CD4-positive, alpha-beta memory T cell (primary cell): ENCODE measurements at regions of chr12 and their contacts with region 1.

Region 1: GRCh38 chr12:949453-950191 is at the start of gene RAD52:
- DNase-seq: peak; percentile 96 to 97 (median 96)
- H3K4me3 ChIP-seq: peak within 1 kb of the TSS; percentile 70 to 98
- H3K4me3 Mint-ChIP-seq: peak within 1 kb of the TSS; percentile 92 to 97 (median 95)
- H3K27ac ChIP-seq: peak within 1 kb of the TSS; percentile 75
- H3K27ac Mint-ChIP-seq: peak within 1 kb of the TSS; percentile 93 to 96 (median 94)
- H3K4me1 ChIP-seq: peaks cover 22% of the 10 kb centered on the region
- H3K4me1 Mint-ChIP-seq: peaks cover 18 to 41% (median 28%) of the 10 kb centered on the region in 4 donors
- H3K27me3 ChIP-seq: no peaks in the 10 kb centered on the region
- H3K27me3 Mint-ChIP-seq: no peaks in the 10 kb centered on the region
- total RNA-seq, gene RAD52: 30.7 to 31.5 TPM

Region 2: GRCh38 chr12:563250-563781 is 386.3 kb before region 1 on chr12:
- CTCF ChIA-PET with region 1: interaction called, 20 read pairs
- POLR2A ChIA-PET with region 1: interaction called, 8 read pairs
- intact Hi-C with region 1: no loop called
- DNase-seq: peak; percentile 74 to 81 (median 78)
- H3K4me3 ChIP-seq: peak overlapping the region; percentile 44 to 51
- H3K4me3 Mint-ChIP-seq: peak overlapping the region; percentile 79 to 93 (median 86)
- H3K27ac ChIP-seq: peak overlapping the region; percentile 71
- H3K27ac Mint-ChIP-seq: peak overlapping the region; percentile 88 to 97 (median 93)
- H3K4me1 ChIP-seq: peaks cover 60% of the 10 kb centered on the region
- H3K4me1 Mint-ChIP-seq: peaks cover 55 to 83% (median 69%) of the 10 kb centered on the region in 4 donors
- H3K27me3 ChIP-seq: no peaks in the 10 kb centered on the region
- H3K27me3 Mint-ChIP-seq: no peaks in the 10 kb centered on the region

Region 3: DNA sequence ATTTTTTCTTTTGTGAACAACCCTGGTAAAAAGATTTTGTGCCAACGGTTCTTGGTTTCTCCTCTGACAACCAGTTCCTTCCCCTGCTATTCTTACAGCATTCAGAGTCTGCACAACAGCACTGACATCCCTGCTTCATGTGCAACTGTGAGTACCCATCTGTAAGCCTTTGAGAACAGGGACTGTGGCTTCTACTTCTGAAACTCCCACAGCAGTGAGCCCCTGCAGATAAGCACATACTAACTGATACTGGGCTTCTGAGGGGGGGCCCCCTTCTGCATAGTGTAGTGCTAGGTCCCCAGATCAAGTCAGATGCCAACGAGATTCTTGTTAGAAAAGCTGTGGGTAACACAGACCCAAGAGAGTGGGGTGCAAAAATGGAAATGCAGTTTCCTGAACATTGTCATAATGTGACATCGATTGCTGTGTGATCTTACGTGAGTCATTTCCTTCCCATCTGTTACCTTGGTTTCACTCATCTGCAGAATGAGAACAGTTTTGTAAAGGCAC is 275.3 kb before region 1 on chr12:
- CTCF ChIA-PET with region 1: no interaction called
- POLR2A ChIA-PET with region 1: no interaction called
- intact Hi-C with region 1: no loop called
- DNase-seq: peak; percentile 77 to 91 (median 83)
- H3K4me3 ChIP-seq: peak overlapping the region; percentile 27 to 44
- H3K4me3 Mint-ChIP-seq: peak overlapping the region; percentile 67 to 91 (median 84)
- H3K27ac ChIP-seq: peak overlapping the region; percentile 70
- H3K27ac Mint-ChIP-seq: peak overlapping the region; percentile 93 to 100 (median 99)
- H3K4me1 ChIP-seq: peaks cover 61% of the 10 kb centered on the region
- H3K4me1 Mint-ChIP-seq: peaks cover 36 to 67% (median 53%) of the 10 kb centered on the region in 4 donors
- H3K27me3 ChIP-seq: no peaks in the 10 kb centered on the region
- H3K27me3 Mint-ChIP-seq: no peaks in the 10 kb centered on the region

Region 4: DNA sequence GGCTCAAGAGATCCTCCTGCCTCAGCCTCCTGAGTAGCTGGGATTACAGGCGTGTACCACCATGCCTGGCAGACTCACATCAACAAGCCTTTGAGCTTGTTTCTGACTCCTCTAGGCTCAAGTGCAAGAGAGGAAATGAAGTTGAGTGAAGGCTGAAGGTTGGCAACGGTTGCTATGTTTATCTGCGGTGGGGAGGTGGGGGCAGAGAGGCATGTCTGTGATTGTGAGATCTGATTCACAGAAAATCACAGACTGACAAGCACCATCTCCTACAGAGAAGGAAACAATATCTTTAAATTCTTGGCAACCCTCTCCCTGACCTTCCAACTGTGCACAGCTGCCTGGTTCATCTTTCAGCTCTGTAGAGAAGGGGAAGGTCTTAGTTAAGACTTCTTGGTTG is 264.2 kb before region 1 on chr12:
- CTCF ChIA-PET with region 1: no interaction called
- POLR2A ChIA-PET with region 1: no interaction called
- intact Hi-C with region 1: loop called (anchors 5 kb)
- DNase-seq: peak; percentile 90 to 97 (median 92)
- H3K4me3 ChIP-seq: no peak overlapping the region
- H3K4me3 Mint-ChIP-seq: peak overlapping the region in 7 of 8 donors; percentile 53 to 81 (median 73)
- H3K27ac ChIP-seq: peak overlapping the region; percentile 81
- H3K27ac Mint-ChIP-seq: peak overlapping the region; percentile 90 to 100 (median 99)
- H3K4me1 ChIP-seq: peaks cover 33% of the 10 kb centered on the region
- H3K4me1 Mint-ChIP-seq: peaks cover 32 to 43% (median 35%) of the 10 kb centered on the region in 4 donors
- H3K27me3 ChIP-seq: no peaks in the 10 kb centered on the region
- H3K27me3 Mint-ChIP-seq: no peaks in the 10 kb centered on the region

Region 5: DNA sequence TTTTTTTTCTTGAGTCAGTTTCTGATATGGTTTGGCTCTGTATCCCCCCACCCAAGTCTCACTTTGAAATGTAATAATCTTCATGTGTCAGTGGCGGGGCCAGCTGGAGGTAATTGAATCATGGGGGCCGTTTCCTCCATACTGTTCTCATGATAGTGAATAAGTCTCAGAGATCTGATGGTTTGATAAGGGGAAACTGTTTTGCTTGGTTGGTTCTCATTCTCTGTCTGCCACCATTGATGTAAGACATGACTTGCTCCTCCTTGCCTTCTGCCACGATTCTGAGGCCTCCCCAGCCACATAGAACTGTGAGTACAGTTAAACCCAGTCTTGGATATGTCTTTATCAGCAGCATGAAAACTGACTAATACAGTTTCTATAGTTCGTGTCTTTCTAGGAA is 154.3 kb before region 1 on chr12:
- CTCF ChIA-PET with region 1: no interaction called
- POLR2A ChIA-PET with region 1: no interaction called
- intact Hi-C with region 1: no loop called
- DNase-seq: peak; percentile 27 to 70 (median 37)
- H3K4me3 ChIP-seq: no peak overlapping the region
- H3K4me3 Mint-ChIP-seq: peak overlapping the region in 7 of 8 donors; percentile 48 to 69 (median 52)
- H3K27ac ChIP-seq: no peak overlapping the region
- H3K27ac Mint-ChIP-seq: peak overlapping the region; percentile 43 to 88 (median 83)
- H3K4me1 ChIP-seq: peaks cover 75% of the 10 kb centered on the region
- H3K4me1 Mint-ChIP-seq: peaks cover 49 to 84% (median 68%) of the 10 kb centered on the region in 4 donors
- H3K27me3 ChIP-seq: no peaks in the 10 kb centered on the region
- H3K27me3 Mint-ChIP-seq: no peaks in the 10 kb centered on the region

Region 6: GRCh38 chr12:905261-906031 is 44.2 kb before region 1 on chr12:
- CTCF ChIA-PET with region 1: interaction called, 6 read pairs
- POLR2A ChIA-PET with region 1: interaction called, 12 read pairs
- intact Hi-C with region 1: loop called (anchors 5 kb)
- DNase-seq: peak in 4 of 5 donors; percentile 4 to 41 (median 18)
- H3K4me3 ChIP-seq: no peak overlapping the region
- H3K4me3 Mint-ChIP-seq: peak overlapping the region in 7 of 8 donors; percentile 17 to 75 (median 58)
- H3K27ac ChIP-seq: no peak overlapping the region
- H3K27ac Mint-ChIP-seq: peak overlapping the region in 6 of 7 donors; percentile 18 to 77 (median 66)
- H3K4me1 ChIP-seq: peaks cover 13% of the 10 kb centered on the region
- H3K4me1 Mint-ChIP-seq: peaks cover 17 to 46% (median 21%) of the 10 kb centered on the region in 4 donors
- H3K27me3 ChIP-seq: no peaks in the 10 kb centered on the region
- H3K27me3 Mint-ChIP-seq: no peaks in the 10 kb centered on the region

Region 7: DNA sequence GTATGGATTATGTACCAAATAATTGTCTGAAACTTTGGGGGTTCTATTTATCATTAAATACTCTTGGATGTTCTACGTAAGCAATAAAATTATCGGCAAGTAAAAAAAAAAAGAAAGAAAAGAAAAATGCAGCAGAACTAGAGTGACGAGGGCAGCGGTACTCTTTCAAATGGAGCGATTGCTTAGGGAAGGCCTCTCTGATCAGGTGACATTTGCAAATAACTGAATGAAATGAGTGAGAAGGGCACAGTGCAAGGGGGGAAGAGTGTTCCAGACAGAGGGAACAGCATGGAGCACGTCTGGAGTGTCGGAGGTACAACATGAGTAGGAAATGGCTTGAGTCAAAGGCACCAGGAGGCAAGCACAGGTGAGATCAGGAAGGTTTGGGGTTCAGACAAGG is 14.1 kb after region 1 on chr12:
- CTCF ChIA-PET with region 1: no interaction called
- POLR2A ChIA-PET with region 1: no interaction called
- intact Hi-C with region 1: no loop called
- DNase-seq: no peak
- H3K4me3 ChIP-seq: no peak overlapping the region
- H3K4me3 Mint-ChIP-seq: no peak overlapping the region
- H3K27ac ChIP-seq: no peak overlapping the region
- H3K27ac Mint-ChIP-seq: no peak overlapping the region
- H3K4me1 ChIP-seq: no peaks in the 10 kb centered on the region
- H3K4me1 Mint-ChIP-seq: no peaks in the 10 kb centered on the region
- H3K27me3 ChIP-seq: no peaks in the 10 kb centered on the region
- H3K27me3 Mint-ChIP-seq: no peaks in the 10 kb centered on the region

Region 8: GRCh38 chr12:990661-991349 is 41.2 kb after region 1 on chr12 and contains the start of gene ERC1:
- CTCF ChIA-PET with region 1: interaction called, 9 read pairs
- POLR2A ChIA-PET with region 1: interaction called, 32 read pairs
- intact Hi-C with region 1: loop called (anchors 1 kb)
- DNase-seq: peak; percentile 78 to 90 (median 85)
- H3K4me3 ChIP-seq: peak within 1 kb of the TSS; percentile 69 to 78
- H3K4me3 Mint-ChIP-seq: peak within 1 kb of the TSS; percentile 92 to 100 (median 98)
- H3K27ac ChIP-seq: peak within 1 kb of the TSS; percentile 69
- H3K27ac Mint-ChIP-seq: peak within 1 kb of the TSS; percentile 89 to 99 (median 98)
- H3K4me1 ChIP-seq: peaks cover 31% of the 10 kb centered on the region
- H3K4me1 Mint-ChIP-seq: peaks cover 27 to 45% (median 39%) of the 10 kb centered on the region in 4 donors
- H3K27me3 ChIP-seq: no peaks in the 10 kb centered on the region
- H3K27me3 Mint-ChIP-seq: no peaks in the 10 kb centered on the region
- total RNA-seq, gene ERC1: 34.3 to 41.7 TPM